WTC11 (cell line): ENCODE measurements at regions of chr9 and their contacts with region 1.

Region 1: DNA sequence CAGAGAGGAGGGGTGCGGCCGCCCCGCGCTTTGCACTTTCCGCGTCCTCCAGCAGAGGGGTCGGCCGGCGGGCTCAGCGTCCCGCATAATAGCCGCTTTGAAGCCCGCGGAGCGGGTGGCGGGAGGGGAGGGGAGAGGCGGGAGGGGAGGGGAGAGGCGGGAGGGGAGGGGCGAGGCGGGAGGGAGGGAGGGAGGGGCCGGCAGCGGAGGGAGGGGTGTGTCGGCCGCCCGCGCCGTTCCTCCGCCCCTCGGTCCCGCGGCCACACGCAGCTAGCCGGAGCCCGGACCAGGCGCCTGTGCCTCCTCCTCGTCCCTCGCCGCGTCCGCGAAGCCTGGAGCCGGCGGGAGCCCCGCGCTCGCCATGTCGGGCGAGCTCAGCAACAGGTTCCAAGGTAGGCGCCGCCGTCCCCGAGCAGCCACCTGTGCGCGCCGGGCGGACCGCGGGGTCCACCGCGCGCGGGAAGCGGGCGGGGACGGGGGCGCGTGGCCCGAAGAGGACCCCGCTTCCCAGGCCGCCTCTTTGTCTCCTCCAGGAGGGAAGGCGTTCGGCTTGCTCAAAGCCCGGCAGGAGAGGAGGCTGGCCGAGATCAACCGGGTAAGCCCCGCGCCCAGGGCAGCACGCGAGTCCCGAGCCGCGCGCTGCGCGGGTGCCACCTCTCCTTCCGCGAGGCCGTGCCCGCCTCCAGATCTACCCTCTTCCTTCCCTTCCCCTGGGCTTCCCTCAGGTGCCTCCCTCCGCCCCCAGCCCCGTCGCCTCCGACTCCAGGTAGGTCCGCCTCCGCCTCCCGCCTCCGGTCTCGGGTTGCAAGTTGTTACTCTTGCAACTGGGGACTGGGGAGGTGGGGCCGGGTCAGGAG is at the start of gene AIF1L:
- DNase-seq: peak; percentile 93
- ATAC-seq: peak; percentile 70
- H3K4me3 Mint-ChIP-seq: peak within 1 kb of the TSS; percentile 79
- H3K27ac Mint-ChIP-seq: peak within 1 kb of the TSS; percentile 84
- H3K4me1 Mint-ChIP-seq: peaks cover 46% of the 10 kb centered on the region
- H3K27me3 Mint-ChIP-seq: peaks cover 6% of the 10 kb centered on the region
- CTCF ChIP-seq: no peak
- total RNA-seq, gene AIF1L: 103 to 109 TPM (median 106 TPM) in 3 replicates

Region 2: DNA sequence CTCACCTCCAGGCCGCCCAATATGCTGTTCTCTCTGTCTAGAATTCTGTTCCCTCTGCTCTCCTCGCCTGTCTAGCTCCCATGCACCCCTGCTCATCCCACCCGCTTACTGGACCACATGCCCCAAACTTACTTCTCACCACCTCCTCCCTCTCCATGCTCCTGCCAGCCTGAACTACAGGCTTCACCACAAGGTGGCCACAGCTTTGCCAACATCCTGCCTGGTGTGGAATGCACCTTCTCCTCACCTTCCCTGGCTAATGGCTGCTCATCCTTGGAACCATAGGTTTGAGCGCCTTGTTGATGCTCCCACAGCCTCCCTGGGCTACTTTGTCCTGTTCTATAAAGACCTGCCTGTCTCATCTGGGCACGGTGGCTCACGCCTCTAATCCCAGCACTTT is 77.9 kb before region 1 on chr9:
- CTCF ChIA-PET with region 1: no interaction called
- POLR2A ChIA-PET with region 1: no interaction called
- DNase-seq: no peak
- ATAC-seq: peak; percentile 38
- H3K4me3 Mint-ChIP-seq: no peak overlapping the region
- H3K27ac Mint-ChIP-seq: peak overlapping the region; percentile 92
- H3K4me1 Mint-ChIP-seq: peaks cover 16% of the 10 kb centered on the region
- H3K27me3 Mint-ChIP-seq: no peaks in the 10 kb centered on the region
- CTCF ChIP-seq: no peak

Region 3: DNA sequence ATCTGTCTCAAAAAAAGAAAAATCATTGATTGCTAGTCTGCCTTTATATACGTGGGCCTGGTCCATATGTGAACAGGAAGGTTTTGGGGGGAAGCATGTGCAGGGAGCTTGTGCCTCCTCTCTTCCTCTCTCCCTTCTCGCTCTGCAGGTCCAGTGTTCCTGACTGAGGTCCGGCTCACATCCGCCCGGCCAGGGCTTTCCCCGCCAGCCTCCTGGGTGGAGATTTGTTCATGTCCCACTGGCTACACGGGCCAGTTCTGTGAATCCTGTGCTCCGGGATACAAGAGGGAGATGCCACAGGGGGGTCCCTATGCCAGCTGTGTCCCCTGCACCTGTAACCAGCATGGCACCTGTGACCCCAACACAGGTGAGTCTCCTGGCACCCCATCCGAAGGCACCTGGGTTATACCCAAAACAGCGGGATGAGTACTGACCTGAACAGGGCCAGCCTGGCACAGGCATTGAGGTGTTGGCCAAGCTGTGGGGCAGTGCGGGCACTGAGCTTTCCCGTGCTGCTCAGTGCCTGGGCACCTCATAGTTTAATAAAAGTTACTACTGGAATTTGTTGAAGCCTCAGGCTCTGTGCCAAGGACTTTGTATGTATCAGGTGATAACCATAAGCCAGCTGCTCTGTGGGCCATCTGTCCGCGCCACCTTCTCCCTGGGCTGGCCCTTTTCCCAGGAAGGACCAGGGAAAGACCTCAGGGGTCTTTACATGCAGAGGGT is 39.6 kb before region 1 on chr9:
- CTCF ChIA-PET with region 1: interaction called, 18 read pairs
- POLR2A ChIA-PET with region 1: no interaction called
- DNase-seq: no peak
- ATAC-seq: no peak
- H3K4me3 Mint-ChIP-seq: no peak overlapping the region
- H3K27ac Mint-ChIP-seq: no peak overlapping the region
- H3K4me1 Mint-ChIP-seq: no peaks in the 10 kb centered on the region
- H3K27me3 Mint-ChIP-seq: no peaks in the 10 kb centered on the region
- CTCF ChIP-seq: no peak

Region 4: DNA sequence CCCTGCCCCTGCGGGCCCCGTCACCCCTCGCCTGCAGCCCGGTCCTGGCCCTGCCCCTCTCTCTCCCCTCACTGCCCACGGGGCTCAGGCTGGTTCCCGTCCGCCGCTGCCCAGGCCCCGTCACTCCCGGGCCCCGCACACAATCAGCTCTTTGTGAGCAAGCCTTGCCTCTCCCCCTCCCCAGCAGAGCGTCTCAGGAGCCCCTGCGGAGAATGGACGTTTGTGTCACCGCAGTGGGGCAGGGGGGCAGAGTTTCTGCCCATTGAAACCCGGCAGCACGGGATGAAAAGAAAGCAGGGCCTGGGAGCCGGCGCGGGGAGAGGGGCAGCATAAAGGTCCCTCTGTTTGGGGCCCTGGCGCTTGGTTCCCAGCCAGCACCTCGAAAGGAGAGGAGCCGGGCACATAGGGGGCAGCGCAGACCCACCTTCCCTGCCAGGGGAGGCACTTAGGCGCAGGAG is 15.4 kb after region 1 on chr9:
- CTCF ChIA-PET with region 1: interaction called, 14 read pairs
- POLR2A ChIA-PET with region 1: interaction called, 22 read pairs
- DNase-seq: no peak
- ATAC-seq: peak; percentile 13; the same call in 1 of the 2 replicates
- H3K4me3 Mint-ChIP-seq: no peak overlapping the region
- H3K27ac Mint-ChIP-seq: no peak overlapping the region
- H3K4me1 Mint-ChIP-seq: peaks cover 17% of the 10 kb centered on the region
- H3K27me3 Mint-ChIP-seq: no peaks in the 10 kb centered on the region
- CTCF ChIP-seq: no peak